Endothelial cell of umbilical vein (primary cell): ENCODE measurements at regions of chr19 and their contacts with region 1.

Region 1: DNA sequence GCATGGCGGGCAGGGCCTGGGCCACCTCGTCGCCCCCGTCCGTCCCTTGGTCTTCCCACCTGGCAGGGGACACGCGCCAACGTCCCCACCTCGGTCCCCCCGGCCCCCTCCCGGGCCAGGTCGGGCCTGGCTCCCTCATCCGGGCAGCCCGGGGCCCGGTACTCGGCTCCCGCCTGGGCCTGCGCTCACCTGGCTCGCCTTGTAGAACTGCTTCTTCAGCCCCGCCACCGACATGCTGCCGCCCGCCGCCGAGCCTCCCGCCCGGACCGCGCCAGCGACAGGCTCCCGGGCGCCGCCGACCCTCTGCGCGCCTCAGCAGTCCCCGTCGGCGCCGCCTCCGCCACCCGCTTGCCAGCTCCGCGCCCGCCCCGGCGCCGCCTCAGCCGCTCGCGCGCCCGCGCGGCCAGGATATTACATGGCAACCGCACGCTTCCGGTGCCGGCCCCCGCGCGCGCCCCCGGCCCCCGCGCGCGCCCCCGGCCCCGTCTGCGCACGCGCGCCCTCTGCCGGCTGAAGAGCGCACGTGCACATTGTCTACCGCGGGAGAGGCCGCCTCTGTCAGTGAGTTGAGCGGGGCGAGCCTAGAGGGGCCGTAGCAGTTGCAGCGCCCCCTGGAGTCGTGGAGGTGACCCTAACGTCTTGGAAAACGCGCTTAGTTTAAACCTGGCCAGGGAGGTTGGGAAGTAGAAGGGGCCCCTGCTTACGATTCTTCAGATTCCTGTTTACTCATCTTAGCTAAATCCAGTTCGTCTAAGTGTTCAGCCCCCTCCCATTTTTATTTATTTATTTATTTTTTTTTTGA is at the start of gene SH3GL1:
- DNase-seq: peak; percentile 88
- H3K4me3 ChIP-seq: peak within 1 kb of the TSS; percentile 76 to 98 (median 91)
- H3K27ac ChIP-seq: peak within 1 kb of the TSS; percentile 95
- H3K4me1 ChIP-seq: peaks cover 28% of the 10 kb centered on the region
- H3K27me3 ChIP-seq: no peaks in the 10 kb centered on the region
- CTCF ChIP-seq: peak; percentile 95 to 99
- POLR2A ChIP-seq: peak; percentile 39
- total RNA-seq, gene SH3GL1: 143 and 153 TPM in 2 replicates

Region 2: DNA sequence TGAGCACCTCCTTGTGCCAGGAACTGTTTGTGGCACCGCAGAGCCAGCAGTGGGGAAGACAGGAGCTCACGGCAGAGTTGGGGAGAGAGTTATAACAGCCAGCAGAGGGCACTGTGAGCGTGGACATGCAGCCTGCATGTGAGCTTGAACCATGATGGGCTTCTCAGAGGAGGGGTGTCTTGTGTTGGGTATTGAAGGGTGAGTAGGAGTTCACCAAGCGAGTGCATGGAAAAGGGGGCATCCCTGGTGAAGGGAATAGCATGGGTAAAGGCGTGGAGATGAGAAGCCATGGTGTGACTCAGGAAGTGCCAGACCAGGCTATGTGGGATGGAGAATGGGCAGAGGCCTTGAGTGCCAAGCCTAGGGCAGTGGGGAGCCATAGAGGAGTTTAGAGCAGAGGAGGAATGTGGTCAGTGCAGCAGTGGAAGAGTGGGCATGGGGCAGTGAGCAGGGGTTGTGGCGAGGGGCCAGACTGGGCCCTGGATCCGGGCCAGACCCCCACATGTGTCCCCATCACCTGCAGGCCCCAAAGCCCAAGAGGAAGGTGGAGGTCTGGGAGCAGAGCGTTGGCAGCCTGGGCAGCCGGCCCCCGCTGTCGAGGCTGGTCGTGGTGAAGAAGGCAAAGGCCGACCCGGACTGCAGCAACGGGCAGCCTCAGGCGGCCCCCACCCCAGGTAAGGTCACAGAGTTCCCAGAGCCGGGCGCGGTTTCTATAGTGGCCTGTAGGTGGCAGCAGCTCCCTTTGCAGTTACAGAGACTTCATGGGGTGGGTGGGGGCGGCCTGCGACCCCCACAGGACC is 133.0 kb before region 1 on chr19:
- CTCF ChIA-PET with region 1: interaction called, 8 read pairs
- POLR2A ChIA-PET with region 1: no interaction called
- dilution Hi-C with region 1: no loop called
- intact Hi-C with region 1: loop called (anchors 1 kb)
- DNase-seq: peak; percentile 26
- H3K4me3 ChIP-seq: no peak overlapping the region
- H3K27ac ChIP-seq: no peak overlapping the region
- H3K4me1 ChIP-seq: no peaks in the 10 kb centered on the region
- H3K27me3 ChIP-seq: no peaks in the 10 kb centered on the region
- CTCF ChIP-seq: peak; percentile 66 to 88
- POLR2A ChIP-seq: no peak

Region 3: DNA sequence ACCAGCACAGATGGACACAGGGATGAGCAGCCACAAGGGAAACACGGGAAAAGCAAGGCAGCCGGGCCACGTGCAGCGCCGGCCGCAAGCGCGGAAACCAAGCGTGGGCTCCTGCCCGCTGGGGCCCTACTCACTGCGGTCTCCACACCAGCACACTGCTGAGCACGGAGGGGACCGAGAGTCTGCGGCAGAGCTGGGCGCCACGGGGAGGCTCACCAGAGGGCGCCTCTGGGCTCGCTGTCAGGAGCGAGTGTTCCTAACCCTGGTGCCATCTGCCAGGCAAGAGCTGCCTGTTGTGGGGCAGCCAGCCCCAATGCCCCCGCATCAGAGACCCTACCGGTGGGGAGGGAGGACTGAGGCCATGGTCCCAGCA is 30.5 kb before region 1 on chr19:
- CTCF ChIA-PET with region 1: interaction called, 105 read pairs
- POLR2A ChIA-PET with region 1: no interaction called
- dilution Hi-C with region 1: no loop called
- intact Hi-C with region 1: loop called (anchors 1 kb)
- DNase-seq: peak; percentile 62
- H3K4me3 ChIP-seq: no peak overlapping the region
- H3K27ac ChIP-seq: peak overlapping the region; percentile 69
- H3K4me1 ChIP-seq: peaks cover 32% of the 10 kb centered on the region
- H3K27me3 ChIP-seq: no peaks in the 10 kb centered on the region
- CTCF ChIP-seq: peak; percentile 40 to 81
- POLR2A ChIP-seq: no peak

Region 4: DNA sequence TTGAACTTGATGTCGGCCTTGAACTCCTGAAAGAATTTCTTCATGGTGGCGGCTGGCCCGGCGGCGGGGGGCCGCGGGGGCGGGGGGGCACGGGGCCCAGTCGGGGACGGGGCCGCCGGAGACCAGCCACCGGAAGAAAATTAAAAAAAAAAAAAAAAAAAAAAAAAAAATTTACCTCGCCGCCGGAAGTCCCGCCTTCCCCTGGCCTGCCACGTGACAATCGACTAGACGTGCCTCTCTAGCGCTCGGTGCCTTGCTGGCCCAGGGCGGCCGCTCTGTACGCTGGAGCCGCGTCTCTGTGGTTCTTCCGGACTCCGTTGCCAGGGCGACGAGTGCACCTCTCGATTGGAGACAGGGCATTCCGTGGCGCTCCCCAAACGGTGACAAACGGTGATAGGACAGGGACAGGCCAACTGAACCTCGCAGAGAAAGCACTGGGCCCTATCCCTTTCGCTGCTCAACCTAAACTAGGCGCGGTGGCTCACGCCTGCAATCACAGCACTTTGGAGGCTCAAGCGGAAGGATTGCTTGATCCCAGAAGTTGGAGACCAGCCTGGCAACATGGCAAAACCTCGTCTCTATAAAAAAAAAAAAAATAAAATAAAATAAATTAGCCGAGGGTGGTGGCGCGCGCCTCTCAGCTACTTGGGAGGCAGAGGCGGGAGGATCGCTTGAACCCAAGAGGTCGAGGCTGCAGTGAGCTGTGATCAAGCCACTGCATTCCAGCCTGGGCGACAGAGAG is 57.5 kb after region 1 on chr19 and contains the start of gene UBXN6:
- CTCF ChIA-PET with region 1: interaction called, 4 read pairs
- POLR2A ChIA-PET with region 1: no interaction called
- dilution Hi-C with region 1: no loop called
- intact Hi-C with region 1: loop called (anchors 1 kb)
- DNase-seq: peak; percentile 96
- H3K4me3 ChIP-seq: peak within 1 kb of the TSS; percentile 62 to 72 (median 69)
- H3K27ac ChIP-seq: peak within 1 kb of the TSS; percentile 43
- H3K4me1 ChIP-seq: peaks cover 14% of the 10 kb centered on the region
- H3K27me3 ChIP-seq: no peaks in the 10 kb centered on the region
- CTCF ChIP-seq: no peak
- POLR2A ChIP-seq: peak; percentile 40
- total RNA-seq, gene UBXN6: 78.5 and 84.5 TPM in 2 replicates